ENCODE measurements at regions of chr1 and their contacts with region 1.

Region 1: GRCh38 chr1:226223786-226224244 is 351 bp downstream of the MIXL1 start:
- DNase-seq: peak; percentile 52
- ATAC-seq: peak; percentile 74
- H3K4me3 Mint-ChIP-seq: peak overlapping the region; percentile 89
- H3K27ac Mint-ChIP-seq: no peak overlapping the region
- H3K4me1 Mint-ChIP-seq: peaks cover 6% of the 10 kb centered on the region
- H3K27me3 Mint-ChIP-seq: peaks cover 4% of the 10 kb centered on the region
- CTCF ChIP-seq: no peak

Region 2: GRCh38 chr1:225977937-225978748 is 245.7 kb before region 1 on chr1:
- CTCF ChIA-PET with region 1: no interaction called
- POLR2A ChIA-PET with region 1: no interaction called
- intact Hi-C with region 1: no loop called
- DNase-seq: no peak
- ATAC-seq: peak; percentile 79
- H3K4me3 Mint-ChIP-seq: peak overlapping the region; percentile 63
- H3K27ac Mint-ChIP-seq: peak overlapping the region; percentile 81
- H3K4me1 Mint-ChIP-seq: peaks cover 33% of the 10 kb centered on the region
- H3K27me3 Mint-ChIP-seq: no peaks in the 10 kb centered on the region
- CTCF ChIP-seq: no peak

Region 3: GRCh38 chr1:225999227-225999911 is 224.4 kb before region 1 on chr1 and contains the start of gene SDE2:
- CTCF ChIA-PET with region 1: no interaction called
- POLR2A ChIA-PET with region 1: no interaction called
- intact Hi-C with region 1: no loop called
- DNase-seq: peak; percentile 99
- ATAC-seq: peak; percentile 82
- H3K4me3 Mint-ChIP-seq: peak within 1 kb of the TSS; percentile 100
- H3K27ac Mint-ChIP-seq: peak within 1 kb of the TSS; percentile 100
- H3K4me1 Mint-ChIP-seq: peaks cover 81% of the 10 kb centered on the region
- H3K27me3 Mint-ChIP-seq: no peaks in the 10 kb centered on the region
- CTCF ChIP-seq: no peak
- total RNA-seq, gene SDE2: 21.1 and 21.8 TPM in 2 replicates

Region 4: DNA sequence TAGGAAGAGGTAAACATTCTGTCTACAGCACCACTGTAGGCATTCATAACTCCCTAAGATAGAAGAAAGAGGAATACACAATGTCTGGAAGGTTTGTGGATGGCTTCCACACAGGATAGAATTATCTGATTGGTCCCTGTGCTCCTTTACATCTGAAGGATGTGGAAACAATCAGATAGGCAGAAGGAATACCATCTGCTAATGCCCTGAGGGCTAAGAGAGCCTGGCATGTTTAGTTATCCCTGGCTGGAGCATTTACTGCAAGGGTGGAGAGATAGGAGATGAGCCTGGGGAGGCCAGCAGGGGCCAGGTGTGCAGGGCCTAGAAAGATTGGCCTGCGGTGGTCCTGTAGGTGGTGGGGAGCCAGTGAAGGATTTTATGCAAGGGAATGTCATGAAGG is 28.7 kb before region 1 on chr1:
- CTCF ChIA-PET with region 1: no interaction called
- POLR2A ChIA-PET with region 1: no interaction called
- intact Hi-C with region 1: no loop called
- DNase-seq: no peak
- ATAC-seq: no peak
- H3K4me3 Mint-ChIP-seq: no peak overlapping the region
- H3K27ac Mint-ChIP-seq: no peak overlapping the region
- H3K4me1 Mint-ChIP-seq: peaks cover 11% of the 10 kb centered on the region
- H3K27me3 Mint-ChIP-seq: no peaks in the 10 kb centered on the region
- CTCF ChIP-seq: no peak

Region 5: DNA sequence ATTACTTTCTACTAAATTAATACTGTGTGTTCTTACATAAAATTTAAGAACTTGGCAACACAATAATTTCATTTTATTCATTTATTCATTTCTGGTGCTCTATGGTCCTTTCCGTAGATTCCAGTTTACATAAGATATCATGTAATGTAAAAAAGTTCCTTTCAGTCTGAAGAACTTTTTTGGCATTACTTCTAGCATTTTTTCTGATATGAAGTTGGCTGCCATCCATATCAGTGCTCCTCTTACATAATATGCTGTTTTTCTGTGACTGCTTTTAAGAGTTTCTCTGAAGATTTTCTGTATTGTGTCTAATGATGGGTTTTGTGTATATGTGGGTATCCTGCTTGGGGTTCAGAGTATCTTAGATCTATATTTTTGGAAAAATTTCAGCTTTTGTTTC is 50.3 kb after region 1 on chr1:
- CTCF ChIA-PET with region 1: no interaction called
- POLR2A ChIA-PET with region 1: interaction called, 3 read pairs
- intact Hi-C with region 1: loop called (anchors 10 kb)
- DNase-seq: no peak
- ATAC-seq: no peak
- H3K4me3 Mint-ChIP-seq: no peak overlapping the region
- H3K27ac Mint-ChIP-seq: no peak overlapping the region
- H3K4me1 Mint-ChIP-seq: no peaks in the 10 kb centered on the region
- H3K27me3 Mint-ChIP-seq: no peaks in the 10 kb centered on the region
- CTCF ChIP-seq: no peak

Region 6: DNA sequence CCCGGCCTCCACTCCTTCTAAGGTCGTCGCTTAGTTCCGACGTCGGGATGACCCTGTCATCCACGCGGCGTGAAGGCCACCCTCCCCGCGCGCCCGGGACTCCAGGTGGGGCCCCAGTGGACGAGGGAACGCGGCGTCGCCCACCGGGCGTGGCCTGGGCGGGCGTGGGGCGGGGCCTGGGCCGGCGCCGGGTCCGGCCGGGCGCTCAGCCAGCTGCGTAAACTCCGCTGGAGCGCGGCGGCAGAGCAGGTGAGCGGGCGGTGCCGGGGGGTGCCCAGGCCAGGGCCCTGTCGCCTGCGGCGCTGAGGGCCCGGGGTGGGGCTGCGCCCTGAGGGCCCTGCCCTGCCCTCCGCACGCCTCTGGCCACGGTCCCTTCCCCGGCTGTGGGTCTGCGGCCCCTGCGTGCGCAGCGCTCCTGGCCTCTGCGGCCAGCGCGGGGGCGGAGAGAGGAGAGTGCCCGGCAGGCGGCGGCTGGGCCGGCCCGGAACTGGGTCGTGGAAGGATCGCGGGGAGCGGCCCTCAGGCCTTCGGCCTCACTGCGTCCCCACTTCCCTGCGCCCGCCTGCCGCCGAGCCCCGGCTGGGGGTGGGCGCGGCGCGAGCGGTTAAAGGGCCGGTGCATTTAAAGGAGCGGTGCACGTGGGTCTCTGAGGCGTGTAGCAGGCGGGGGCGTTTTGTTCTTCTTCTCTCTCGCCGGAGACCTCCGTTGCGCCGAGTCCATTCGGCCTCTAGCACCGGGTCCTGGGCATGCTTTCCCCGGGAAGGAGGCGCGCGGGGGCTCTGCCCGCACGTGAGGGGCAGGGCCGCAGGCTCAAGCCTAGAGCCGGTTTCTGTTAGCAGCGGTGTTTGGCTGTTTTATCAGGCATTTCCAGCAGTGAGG is 646.8 kb after region 1 on chr1 and contains the start of gene PSEN2:
- CTCF ChIA-PET with region 1: no interaction called
- POLR2A ChIA-PET with region 1: no interaction called
- intact Hi-C with region 1: no loop called
- DNase-seq: peak; percentile 80
- ATAC-seq: peak; percentile 96
- H3K4me3 Mint-ChIP-seq: peak within 1 kb of the TSS; percentile 87
- H3K27ac Mint-ChIP-seq: peak within 1 kb of the TSS; percentile 53
- H3K4me1 Mint-ChIP-seq: peaks cover 24% of the 10 kb centered on the region
- H3K27me3 Mint-ChIP-seq: no peaks in the 10 kb centered on the region
- CTCF ChIP-seq: no peak
- total RNA-seq, gene PSEN2: 13.4 and 14.3 TPM in 2 replicates